Mammary epithelial cell (primary cell): ENCODE measurements at regions of chr6 and their contacts with region 1.

Region 1: DNA sequence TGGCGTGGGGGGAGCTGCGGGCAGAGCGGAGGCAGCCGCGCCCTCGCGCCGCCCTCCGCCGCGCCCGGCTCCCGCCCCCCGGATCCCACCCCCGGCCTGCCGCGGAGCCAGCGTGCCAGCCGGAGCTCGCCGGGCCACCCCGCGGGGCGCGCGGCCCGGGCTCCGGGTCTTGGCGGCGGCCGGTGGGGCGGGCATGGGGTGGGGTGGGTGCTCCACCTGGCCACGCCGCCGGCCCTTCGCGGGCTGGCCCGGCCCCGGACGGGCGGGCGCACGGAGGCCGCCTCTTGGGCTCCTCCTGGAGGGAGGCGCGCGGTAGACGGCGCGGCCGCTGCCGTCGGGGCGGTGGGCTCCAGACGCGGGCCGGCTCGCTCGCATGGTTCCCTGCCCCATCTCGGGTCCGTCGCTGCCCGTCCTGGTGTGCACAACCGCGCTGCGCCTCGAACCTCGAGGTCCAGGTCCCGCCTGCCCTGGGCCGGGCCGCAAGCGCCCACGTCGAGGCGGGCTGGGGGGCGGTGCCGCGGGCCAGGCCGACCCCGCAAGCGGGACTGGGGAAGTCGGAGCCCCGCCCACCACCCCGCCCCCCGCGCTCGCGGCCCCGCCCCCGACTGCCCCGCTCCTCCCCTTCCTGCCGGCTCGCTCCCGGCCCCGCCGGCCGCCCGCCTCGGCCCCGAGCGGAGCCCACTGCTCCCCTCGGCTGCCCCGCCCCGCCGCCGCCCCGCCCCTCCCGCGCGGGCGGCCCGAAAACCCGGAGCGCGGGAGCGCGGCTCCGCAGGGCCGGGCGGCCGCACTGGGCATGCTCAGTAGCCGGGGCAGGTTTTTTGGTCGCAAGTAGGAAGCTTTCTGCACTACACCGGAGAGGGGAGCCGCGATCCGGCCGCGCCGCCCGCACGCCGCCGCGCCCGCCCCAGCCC is at the start of gene CDYL:
- DNase-seq: peak; percentile 84
- H3K4me3 ChIP-seq: peak within 1 kb of the TSS; percentile 66 to 75 (median 69)
- H3K27ac ChIP-seq: peak within 1 kb of the TSS; percentile 67
- H3K4me1 ChIP-seq: peaks cover 11% of the 10 kb centered on the region
- H3K27me3 ChIP-seq: no peaks in the 10 kb centered on the region
- CTCF ChIP-seq: peak in 1 of 2 donors; percentile 44
- total RNA-seq, gene CDYL: 47.7 to 49.7 TPM

Region 2: DNA sequence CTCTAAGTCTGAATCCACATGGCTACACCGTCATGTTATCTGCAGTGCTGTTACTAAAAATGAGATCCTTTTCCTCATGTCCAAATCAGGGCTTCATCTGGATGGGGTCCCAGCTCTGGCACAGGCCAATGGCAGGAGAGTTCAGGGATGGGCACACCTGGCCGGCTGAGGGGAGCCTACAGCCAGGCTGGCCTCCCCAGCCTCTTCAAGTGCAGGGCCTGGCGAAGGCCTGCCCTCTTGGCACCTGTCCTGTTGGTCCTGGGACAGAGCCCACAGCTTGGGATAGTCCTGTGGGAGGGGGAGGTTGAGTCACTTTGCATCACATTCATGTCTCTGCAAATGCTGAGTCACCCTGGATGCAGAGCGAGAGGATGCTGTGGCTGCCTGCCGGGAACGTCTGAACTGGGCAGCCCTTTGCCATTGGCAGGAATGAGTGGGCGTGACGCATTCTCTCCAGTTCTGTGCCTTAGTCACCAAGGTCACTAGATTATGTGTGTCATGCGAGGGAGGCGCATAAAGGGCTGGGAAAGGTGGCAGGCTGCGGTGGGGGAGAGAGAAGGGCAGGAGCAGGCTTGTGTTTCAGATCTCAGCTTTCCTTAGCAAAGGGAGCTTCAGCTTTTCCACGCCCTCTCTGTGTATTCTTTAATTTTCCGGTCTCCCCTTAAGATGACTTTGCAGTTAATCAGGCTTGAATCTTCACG is 417.3 kb before region 1 on chr6:
- CTCF ChIA-PET with region 1: no interaction called
- dilution Hi-C with region 1: no loop called
- in situ Hi-C with region 1: no loop called
- intact Hi-C with region 1: loop called (anchors 2 kb)
- DNase-seq: peak; percentile 100
- H3K4me3 ChIP-seq: peak overlapping the region in 1 of 3 experiments; percentile 6
- H3K27ac ChIP-seq: peak overlapping the region; percentile 92
- H3K4me1 ChIP-seq: peaks cover 39% of the 10 kb centered on the region
- H3K27me3 ChIP-seq: no peaks in the 10 kb centered on the region
- CTCF ChIP-seq: no peak

Region 3: DNA sequence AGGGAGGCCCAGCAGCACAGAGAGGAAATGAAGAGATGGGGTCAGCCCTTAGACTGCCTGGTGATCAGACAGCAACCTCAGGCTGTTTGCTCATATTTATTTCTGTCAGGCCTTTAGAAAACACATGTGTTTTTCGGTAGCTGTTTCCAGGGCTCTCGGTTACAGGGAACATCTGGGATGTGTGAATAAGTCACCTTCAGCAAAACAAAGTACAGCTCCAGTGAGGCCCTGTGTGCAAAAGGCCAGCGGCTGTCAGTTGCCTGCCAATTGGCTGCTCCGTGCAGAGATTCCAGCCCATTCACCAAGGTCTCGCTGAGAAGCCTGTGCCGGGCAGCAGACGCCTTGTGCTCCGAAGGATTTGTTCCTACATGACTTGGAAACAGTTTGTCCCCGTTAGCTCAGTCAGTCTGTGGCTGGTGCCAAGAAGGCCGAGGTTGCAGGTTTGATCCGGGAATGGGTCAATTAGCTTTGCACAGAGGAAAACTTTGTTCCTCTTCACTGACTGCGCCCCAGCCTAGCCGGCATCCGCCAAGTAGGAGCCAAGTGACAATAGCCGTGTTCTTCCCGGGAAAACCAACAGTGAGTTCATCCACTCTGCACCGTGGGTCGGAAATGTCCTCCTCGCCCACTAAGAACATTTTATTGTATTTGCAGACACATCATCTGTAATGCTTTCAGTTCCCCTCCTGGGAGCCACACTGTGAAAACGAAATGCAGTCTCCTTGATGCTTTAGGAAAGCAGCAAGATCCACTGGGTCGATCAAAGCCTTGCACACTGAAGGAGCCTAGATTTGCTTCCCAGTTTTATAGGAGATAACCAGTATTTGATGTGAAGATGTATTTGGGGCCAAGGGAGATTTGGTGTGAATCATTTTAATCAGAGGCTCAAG is 315.0 kb before region 1 on chr6:
- CTCF ChIA-PET with region 1: no interaction called
- dilution Hi-C with region 1: no loop called
- in situ Hi-C with region 1: no loop called
- intact Hi-C with region 1: loop called (anchors 10 kb)
- DNase-seq: no peak
- H3K4me3 ChIP-seq: no peak overlapping the region
- H3K27ac ChIP-seq: no peak overlapping the region
- H3K4me1 ChIP-seq: peaks cover 26% of the 10 kb centered on the region
- H3K27me3 ChIP-seq: no peaks in the 10 kb centered on the region
- CTCF ChIP-seq: no peak

Region 4: DNA sequence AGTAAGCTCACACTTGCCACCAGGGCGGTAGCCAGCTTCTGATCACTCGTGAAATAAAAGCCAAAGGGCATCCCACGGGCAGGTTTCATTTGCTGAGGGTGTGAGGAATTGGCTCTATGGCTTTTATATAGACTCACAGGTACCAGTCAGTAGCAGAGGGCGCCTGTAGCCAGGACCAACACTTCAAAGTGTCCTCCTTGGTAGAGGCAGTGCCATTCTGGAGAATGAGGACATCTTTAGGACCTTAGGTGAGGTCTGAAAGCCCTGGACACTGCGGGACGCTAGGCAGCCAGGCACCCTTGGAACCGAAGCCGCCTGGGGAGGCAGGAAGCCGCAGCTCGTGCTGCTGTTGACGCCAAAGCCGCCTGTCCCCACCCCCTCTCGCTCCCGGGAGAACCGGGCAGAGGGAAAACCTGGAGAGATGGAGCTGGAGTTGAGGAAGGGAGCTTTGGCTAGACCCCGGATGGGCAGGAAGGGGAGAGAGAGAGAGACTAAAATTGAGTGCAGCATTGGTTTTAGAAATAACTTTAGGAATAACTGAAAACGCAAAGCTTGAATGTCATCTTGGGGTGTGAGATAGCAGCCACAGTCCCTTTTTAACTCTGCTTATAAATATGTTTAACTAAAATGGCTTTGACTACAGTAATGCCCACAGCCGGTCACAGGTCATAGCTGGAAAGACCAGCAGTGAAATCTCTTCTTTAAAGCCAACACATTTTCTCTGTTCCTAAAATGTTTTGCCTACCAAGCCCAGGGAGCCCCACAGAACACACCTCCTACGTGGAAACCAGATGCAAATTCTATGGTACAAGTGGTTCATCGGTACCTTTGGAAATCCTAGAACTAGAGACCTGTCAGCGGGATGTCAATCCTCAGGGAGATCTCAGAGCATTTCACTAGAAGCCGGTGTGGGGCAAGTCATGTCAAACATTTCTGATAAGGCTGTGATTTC is 128.1 kb before region 1 on chr6:
- CTCF ChIA-PET with region 1: no interaction called
- dilution Hi-C with region 1: no loop called
- in situ Hi-C with region 1: no loop called
- intact Hi-C with region 1: loop called (anchors 5 kb)
- DNase-seq: peak; percentile 63
- H3K4me3 ChIP-seq: peak overlapping the region in 2 of 3 experiments; percentile 27 to 35
- H3K27ac ChIP-seq: peak overlapping the region; percentile 20
- H3K4me1 ChIP-seq: peaks cover 16% of the 10 kb centered on the region
- H3K27me3 ChIP-seq: no peaks in the 10 kb centered on the region
- CTCF ChIP-seq: no peak

Region 5: GRCh38 chr6:4864519-4864918 is 88.7 kb after region 1 on chr6:
- CTCF ChIA-PET with region 1: no interaction called
- dilution Hi-C with region 1: no loop called
- in situ Hi-C with region 1: no loop called
- intact Hi-C with region 1: no loop called
- DNase-seq: no peak
- H3K4me3 ChIP-seq: no peak overlapping the region
- H3K27ac ChIP-seq: no peak overlapping the region
- H3K4me1 ChIP-seq: no peaks in the 10 kb centered on the region
- H3K27me3 ChIP-seq: no peaks in the 10 kb centered on the region
- CTCF ChIP-seq: no peak

Region 6: DNA sequence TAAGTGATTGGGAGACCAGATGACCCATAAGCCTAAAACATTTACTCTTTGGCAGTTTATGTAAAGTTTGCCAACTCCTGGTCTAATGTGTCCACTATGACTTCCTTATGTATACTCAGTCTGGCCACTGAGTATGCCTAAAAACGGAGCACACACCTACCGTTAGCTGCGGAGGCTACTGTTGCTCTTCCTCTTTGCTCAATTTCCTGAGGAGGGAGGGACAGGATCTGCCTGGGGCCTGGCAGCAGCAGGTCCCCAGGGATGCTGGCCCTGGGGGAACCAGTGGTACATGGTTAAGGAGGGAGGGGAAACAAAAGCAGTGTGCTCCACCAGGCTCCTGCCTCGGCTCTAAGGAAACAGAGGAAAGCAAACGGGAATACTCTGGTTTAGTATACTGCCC is 113.9 kb after region 1 on chr6:
- CTCF ChIA-PET with region 1: no interaction called
- dilution Hi-C with region 1: no loop called
- in situ Hi-C with region 1: no loop called
- intact Hi-C with region 1: no loop called
- DNase-seq: no peak
- H3K4me3 ChIP-seq: no peak overlapping the region
- H3K27ac ChIP-seq: no peak overlapping the region
- H3K4me1 ChIP-seq: no peaks in the 10 kb centered on the region
- H3K27me3 ChIP-seq: no peaks in the 10 kb centered on the region
- CTCF ChIP-seq: no peak

Region 7: GRCh38 chr6:5030596-5031136 is 254.8 kb after region 1 on chr6:
- CTCF ChIA-PET with region 1: no interaction called
- dilution Hi-C with region 1: no loop called
- in situ Hi-C with region 1: no loop called
- intact Hi-C with region 1: loop called (anchors 10 kb)
- DNase-seq: peak; percentile 38
- H3K4me3 ChIP-seq: no peak overlapping the region
- H3K27ac ChIP-seq: no peak overlapping the region
- H3K4me1 ChIP-seq: peaks cover 15% of the 10 kb centered on the region
- H3K27me3 ChIP-seq: no peaks in the 10 kb centered on the region
- CTCF ChIP-seq: peak; percentile 56 to 58